Left lung (tissue), 14 donors: ENCODE measurements at regions of chr6 and their contacts with region 1.

Region 1: GRCh38 chr6:124870611-124871459 is 91.4 kb upstream of the RNF217 start:
- DNase-seq: peak in 1 of 4 donors; percentile 52
- ATAC-seq: peak; percentile 52
- H3K4me3 ChIP-seq: no peak overlapping the region
- H3K27ac ChIP-seq: no peak overlapping the region
- H3K4me1 ChIP-seq: no peaks in the 10 kb centered on the region
- H3K27me3 ChIP-seq: no peaks in the 10 kb centered on the region
- CTCF ChIP-seq: peak; percentile 56 to 57

Region 2: GRCh38 chr6:124694139-124694782 is 176.6 kb before region 1 on chr6:
- intact Hi-C with region 1: no loop called
- DNase-seq: no peak
- ATAC-seq: no peak
- H3K4me3 ChIP-seq: no peak overlapping the region
- H3K27ac ChIP-seq: no peak overlapping the region
- H3K4me1 ChIP-seq: no peaks in the 10 kb centered on the region
- H3K27me3 ChIP-seq: no peaks in the 10 kb centered on the region
- CTCF ChIP-seq: no peak

Region 3: DNA sequence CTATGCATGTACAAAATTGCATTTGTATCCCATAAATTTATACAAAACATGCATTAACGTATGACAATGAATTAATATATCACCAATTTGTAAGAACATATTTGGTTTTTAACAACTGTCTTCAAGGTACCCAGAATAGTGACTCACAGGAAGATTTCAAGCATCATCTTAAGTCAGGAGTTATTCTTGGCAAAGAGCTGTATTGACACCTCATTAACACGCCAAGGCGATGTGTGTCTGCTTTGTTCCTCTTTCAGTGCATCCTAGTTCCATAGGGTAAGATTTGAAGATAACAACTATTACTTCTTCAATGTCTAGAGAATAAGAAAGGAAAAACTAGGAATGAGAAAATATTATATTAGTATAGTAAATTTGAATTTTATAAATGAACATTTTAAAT is 247.0 kb after region 1 on chr6:
- intact Hi-C with region 1: loop called in 1 of 2 experiments (anchors 5 kb)
- DNase-seq: no peak
- ATAC-seq: no peak
- H3K4me3 ChIP-seq: no peak overlapping the region
- H3K27ac ChIP-seq: no peak overlapping the region
- H3K4me1 ChIP-seq: no peaks in the 10 kb centered on the region
- H3K27me3 ChIP-seq: no peaks in the 10 kb centered on the region
- CTCF ChIP-seq: no peak